ENCODE measurements at regions of chr1 and their contacts with region 1.

Region 1: DNA sequence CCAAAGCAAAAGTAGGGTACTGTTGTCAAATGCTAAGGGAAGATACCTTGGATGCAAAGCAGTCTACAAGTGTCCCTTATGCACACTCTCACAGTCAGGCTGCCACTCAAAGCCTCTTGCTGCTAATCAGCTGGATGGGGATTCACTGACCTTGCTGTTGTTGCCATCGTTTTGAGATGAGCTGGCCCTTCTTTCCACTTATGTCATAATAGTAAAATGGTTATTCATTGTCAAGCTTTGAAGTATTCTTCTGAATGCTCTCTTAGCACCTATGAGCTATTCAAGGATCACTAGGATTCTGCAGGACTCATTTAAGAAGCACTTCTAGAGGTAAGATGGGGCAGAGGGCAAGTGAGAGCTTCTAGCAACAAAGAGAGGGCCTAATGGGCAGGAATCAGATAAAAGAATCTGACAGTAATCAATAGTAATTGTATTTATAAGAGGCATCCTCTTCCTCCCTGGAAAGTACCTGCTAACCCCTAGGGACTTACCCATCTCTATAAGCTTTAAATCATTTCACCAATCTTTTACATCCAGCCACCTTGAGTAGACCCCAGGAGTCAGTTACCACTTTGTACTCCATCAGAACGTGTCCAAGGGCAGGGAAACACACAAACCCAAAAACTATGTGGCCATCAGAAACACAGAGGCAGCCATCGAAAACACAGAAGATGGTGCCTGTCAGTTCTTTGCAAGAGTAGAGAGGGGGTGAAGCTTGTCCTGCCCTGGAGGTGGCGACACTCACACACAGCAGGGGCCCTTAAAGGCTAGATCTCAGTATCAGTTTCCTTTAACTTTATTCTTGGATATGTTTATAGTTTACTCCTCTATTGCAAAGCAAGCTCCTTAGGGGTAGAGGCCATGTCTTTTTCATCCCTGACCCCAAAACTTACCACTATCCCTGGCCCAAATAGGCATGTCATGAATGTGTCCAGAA is 103.7 kb upstream of the NFIA start:
- DNase-seq: peak; percentile 49 to 64
- H3K4me3 ChIP-seq: no peak overlapping the region
- H3K4me1 ChIP-seq: no peaks in the 10 kb centered on the region
- H3K27me3 ChIP-seq: peaks cover 3% of the 10 kb centered on the region

Region 2: GRCh38 chr1:61049850-61050540 is 71.3 kb after region 1 on chr1:
- in situ Hi-C with region 1: loop called (anchors 5 kb)
- DNase-seq: peak; percentile 85 to 95
- H3K4me3 ChIP-seq: peak overlapping the region; percentile 64
- H3K4me1 ChIP-seq: peaks cover 4% of the 10 kb centered on the region; the same call in 1 of the 2 replicates
- H3K27me3 ChIP-seq: no peaks in the 10 kb centered on the region

Region 3: GRCh38 chr1:61588736-61589672 is 610.3 kb after region 1 on chr1:
- in situ Hi-C with region 1: loop called (anchors 10 kb)
- DNase-seq: peak; percentile 63 to 84
- H3K4me3 ChIP-seq: no peak overlapping the region
- H3K4me1 ChIP-seq: no peaks in the 10 kb centered on the region
- H3K27me3 ChIP-seq: no peaks in the 10 kb centered on the region

Region 4: DNA sequence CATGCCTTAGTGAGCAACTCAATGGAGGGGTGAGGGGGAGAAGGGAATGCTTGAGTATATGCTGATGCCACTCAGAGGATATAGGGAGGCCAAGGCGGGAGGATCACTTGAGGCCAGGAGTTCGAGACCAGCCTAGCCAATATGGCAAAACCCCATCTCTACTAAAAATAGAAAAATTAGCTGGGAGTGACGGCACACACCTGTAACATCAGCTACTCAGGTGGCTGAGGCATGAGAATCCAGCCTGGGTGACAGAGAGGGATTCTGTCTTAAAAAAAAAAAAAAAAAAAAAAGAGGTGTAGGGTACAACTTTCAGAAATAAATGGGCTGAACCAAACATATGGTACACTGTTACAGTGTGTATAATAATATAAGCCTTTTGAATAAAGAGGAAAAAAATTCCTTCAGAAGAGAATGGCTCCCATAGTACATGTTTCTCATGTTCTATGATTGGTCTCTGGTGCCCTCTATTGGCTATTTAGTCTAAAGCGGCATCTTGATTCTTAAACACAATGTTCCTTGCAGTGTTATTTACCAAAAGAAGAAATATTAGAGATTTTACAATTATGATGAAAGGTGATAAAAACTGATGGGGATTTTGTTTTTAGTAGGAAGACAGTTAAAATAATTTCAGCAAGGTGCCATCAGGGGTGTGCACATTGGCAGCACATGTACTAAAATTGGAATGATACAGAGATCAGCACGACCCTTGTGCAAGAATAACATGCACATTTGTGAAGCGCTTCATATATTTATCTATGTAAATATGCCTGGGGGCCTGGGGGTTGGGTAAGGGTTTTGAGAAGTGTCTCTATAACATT is 873.4 kb after region 1 on chr1:
- in situ Hi-C with region 1: loop called (anchors 25 kb)
- DNase-seq: peak; percentile 31 to 71
- H3K4me3 ChIP-seq: no peak overlapping the region
- H3K4me1 ChIP-seq: peaks cover 8% of the 10 kb centered on the region
- H3K27me3 ChIP-seq: no peaks in the 10 kb centered on the region

Measured in HAP-1 (cell line).